ENCODE measurements at regions of chr7 and their contacts with region 1.

Region 1: GRCh38 chr7:55018361-55019190 is at the start of gene EGFR:
- DNase-seq: peak; percentile 81 to 87 (median 85)
- ATAC-seq: peak; percentile 77
- H3K4me3 ChIP-seq: peak within 1 kb of the TSS; percentile 49 to 50
- H3K27ac ChIP-seq: peak within 1 kb of the TSS; percentile 80 to 94 (median 90)
- H3K4me1 ChIP-seq: peaks cover 36% of the 10 kb centered on the region
- H3K27me3 ChIP-seq: no peaks in the 10 kb centered on the region
- CTCF ChIP-seq: no peak
- POLR2A ChIP-seq: peak; percentile 66 to 74 (median 73)
- total RNA-seq, gene EGFR: 42.5 to 44.2 TPM

Region 2: GRCh38 chr7:54796150-54796549 is 222.4 kb before region 1 on chr7:
- intact Hi-C with region 1: loop called (anchors 10 kb)
- DNase-seq: no peak
- ATAC-seq: no peak
- H3K4me3 ChIP-seq: no peak overlapping the region
- H3K27ac ChIP-seq: no peak overlapping the region
- H3K4me1 ChIP-seq: no peaks in the 10 kb centered on the region
- H3K27me3 ChIP-seq: no peaks in the 10 kb centered on the region
- CTCF ChIP-seq: no peak
- POLR2A ChIP-seq: no peak

Measured in body of pancreas (tissue), 4 donors.